Activated CD8-positive, alpha-beta T cell treated with anti-CD3 and anti-CD28 coated beads for 36 hours (primary cell): ENCODE measurements at regions of chr15 and their contacts with region 1.

Region 1: DNA sequence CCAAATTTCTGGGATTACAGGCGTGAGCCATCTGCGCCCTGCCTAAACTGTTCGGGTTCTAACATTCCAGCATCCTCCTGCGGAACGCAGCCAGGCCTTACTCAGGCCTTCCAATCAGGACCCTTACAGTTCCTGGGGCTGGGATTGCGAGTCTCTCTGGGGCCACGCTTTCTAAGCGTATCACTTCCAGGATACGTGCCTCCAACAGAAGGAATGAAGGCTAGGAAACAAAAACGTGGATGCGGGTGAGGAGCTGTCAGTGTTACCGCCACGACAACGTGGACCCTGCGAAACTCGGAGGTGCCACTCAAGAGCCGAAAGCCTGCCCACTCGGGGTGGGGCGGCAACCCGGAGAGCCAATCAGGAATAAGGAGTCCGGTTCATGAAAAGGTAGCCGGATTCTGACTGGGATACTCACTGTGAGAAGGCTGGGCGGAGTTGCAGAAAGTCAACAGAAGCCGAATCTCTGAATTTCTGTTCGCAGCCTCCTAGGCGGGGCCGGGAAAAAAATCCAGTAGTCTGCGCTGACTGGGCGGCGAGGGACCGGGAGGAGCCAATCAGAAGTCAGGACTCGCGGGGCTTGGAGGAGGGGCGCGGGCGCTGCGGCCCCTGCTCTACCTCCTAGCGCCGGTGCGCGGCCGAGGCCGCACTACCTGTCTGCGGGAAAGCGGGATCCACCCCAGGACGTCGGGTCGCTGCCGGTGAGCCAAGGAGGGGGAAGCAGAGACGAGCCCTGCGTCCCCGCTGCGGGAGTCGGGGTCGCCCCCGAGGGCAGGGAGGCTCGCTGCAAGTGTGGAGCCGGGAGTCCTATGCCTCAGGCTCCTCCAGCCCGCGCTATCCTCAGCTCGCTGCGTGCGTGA is at the start of gene HYKK:
- DNase-seq: peak; percentile 82
- ATAC-seq: peak; percentile 91
- H3K4me3 Mint-ChIP-seq: peak within 1 kb of the TSS; percentile 79
- H3K27ac Mint-ChIP-seq: peak within 1 kb of the TSS; percentile 18
- H3K4me1 Mint-ChIP-seq: peaks cover 18% of the 10 kb centered on the region
- H3K27me3 Mint-ChIP-seq: no peaks in the 10 kb centered on the region
- CTCF ChIP-seq: no peak
- total RNA-seq, gene HYKK: 1.6 to 2.2 TPM

Region 2: DNA sequence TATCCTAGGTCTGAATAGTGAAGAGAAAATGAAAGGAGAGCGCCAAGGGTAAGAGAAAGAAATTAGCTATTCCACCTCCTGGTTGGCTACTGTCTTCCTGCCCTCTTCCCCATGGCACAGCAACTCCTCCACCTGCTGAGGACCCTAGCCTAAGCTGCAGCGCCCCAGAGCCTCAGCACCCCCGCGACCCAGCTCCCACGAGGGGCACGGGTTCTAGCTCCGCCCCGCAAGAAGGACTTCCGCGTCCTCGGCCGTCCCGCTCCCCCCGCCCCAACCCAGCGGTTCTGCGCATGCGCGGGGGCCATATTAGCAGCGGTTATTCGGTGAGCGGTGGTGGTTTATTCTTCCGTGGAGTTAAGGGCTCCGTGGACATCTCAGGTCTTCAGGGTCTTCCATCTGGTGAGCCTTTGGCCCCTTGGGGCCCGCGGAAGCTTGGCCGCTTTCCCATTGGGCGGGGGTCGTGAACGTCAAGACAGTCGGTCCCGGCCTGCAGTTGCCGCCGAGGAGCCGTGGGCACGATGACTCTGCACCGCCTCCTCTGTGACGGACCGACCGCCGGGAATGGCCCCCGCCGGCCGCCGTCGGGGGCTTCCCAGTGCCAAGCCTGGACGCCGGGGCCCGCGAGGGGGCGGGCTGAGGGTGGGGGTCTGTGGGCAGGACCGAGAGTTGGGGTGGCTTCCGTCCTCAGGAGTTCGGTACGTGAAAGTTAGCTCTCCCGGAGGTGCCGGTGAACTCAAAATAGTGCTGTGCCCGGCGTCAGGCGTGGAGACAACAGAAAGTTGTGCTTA is 33.1 kb after region 1 on chr15 and contains the start of gene PSMA4:
- CTCF ChIA-PET with region 1: no interaction called
- POLR2A ChIA-PET with region 1: interaction called, 12 read pairs
- intact Hi-C with region 1: no loop called
- DNase-seq: peak; percentile 95
- ATAC-seq: peak; percentile 87
- H3K4me3 Mint-ChIP-seq: peak within 1 kb of the TSS; percentile 98
- H3K27ac Mint-ChIP-seq: peak within 1 kb of the TSS; percentile 99
- H3K4me1 Mint-ChIP-seq: peaks cover 22% of the 10 kb centered on the region
- H3K27me3 Mint-ChIP-seq: no peaks in the 10 kb centered on the region
- CTCF ChIP-seq: no peak
- total RNA-seq, gene PSMA4: 256 to 257 TPM

Region 3: DNA sequence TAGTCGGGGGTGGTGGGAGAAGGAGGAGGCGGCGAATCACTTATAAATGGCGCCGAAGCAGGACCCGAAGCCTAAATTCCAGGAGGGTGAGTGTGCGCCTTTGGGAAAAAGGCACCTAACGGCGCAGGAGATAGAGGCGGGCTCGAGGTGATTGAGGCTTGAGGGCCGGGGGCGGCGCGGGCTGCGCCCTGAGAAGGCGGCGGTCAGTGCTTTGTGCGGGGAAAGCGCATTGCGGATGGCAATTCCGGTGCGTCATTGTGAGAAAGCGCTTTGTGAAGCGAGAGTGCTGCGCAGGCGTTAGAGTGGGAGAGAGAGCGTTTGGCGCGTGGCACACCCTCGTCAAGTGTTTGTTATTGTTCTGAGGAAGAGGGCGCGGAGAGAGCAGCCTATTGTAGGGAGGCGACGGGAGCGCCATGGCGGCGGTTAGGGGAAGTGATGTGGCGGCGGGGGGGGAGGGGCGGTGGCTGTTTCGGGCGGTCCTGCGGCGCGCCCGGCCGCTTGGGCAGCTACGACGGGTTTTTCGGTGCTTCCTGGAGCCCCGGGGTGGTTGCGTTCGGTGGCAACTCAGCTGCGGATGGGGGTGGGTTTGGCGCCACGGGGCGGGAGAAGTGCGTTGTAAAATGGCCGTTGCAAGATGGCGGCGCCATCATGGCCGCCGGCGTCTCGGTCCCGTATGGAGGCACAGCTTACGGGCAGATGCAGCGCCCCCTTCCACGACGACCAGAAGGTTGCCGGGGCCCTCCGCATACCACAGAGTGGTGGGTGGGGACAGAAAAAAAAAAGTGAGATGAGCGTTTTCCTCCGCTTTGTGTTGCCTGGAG is 366.0 kb after region 1 on chr15:
- CTCF ChIA-PET with region 1: no interaction called
- POLR2A ChIA-PET with region 1: no interaction called
- intact Hi-C with region 1: no loop called
- DNase-seq: peak; percentile 96
- ATAC-seq: peak; percentile 76
- H3K4me3 Mint-ChIP-seq: peak overlapping the region; percentile 89
- H3K27ac Mint-ChIP-seq: peak overlapping the region; percentile 100
- H3K4me1 Mint-ChIP-seq: peaks cover 30% of the 10 kb centered on the region
- H3K27me3 Mint-ChIP-seq: no peaks in the 10 kb centered on the region
- CTCF ChIP-seq: peak; percentile 29